ENCODE measurements at regions of chr11 and their contacts with region 1.

Region 1: GRCh38 chr11:129695575-129696308 is 119.9 kb upstream of the TMEM45B start:
- H3K4me3 ChIP-seq: no peak overlapping the region
- H3K27ac ChIP-seq: no peak overlapping the region
- H3K4me1 ChIP-seq: no peaks in the 10 kb centered on the region
- CTCF ChIP-seq: peak; percentile 30; the same call in 1 of the 2 replicates

Region 2: GRCh38 chr11:129364143-129364654 is 331.5 kb before region 1 on chr11:
- CTCF ChIA-PET with region 1: interaction called, 20 read pairs
- POLR2A ChIA-PET with region 1: no interaction called
- H3K4me3 ChIP-seq: no peak overlapping the region
- H3K27ac ChIP-seq: no peak overlapping the region
- H3K4me1 ChIP-seq: peaks cover 8% of the 10 kb centered on the region; the same call in 1 of the 2 replicates
- CTCF ChIP-seq: peak; percentile 98

Region 3: DNA sequence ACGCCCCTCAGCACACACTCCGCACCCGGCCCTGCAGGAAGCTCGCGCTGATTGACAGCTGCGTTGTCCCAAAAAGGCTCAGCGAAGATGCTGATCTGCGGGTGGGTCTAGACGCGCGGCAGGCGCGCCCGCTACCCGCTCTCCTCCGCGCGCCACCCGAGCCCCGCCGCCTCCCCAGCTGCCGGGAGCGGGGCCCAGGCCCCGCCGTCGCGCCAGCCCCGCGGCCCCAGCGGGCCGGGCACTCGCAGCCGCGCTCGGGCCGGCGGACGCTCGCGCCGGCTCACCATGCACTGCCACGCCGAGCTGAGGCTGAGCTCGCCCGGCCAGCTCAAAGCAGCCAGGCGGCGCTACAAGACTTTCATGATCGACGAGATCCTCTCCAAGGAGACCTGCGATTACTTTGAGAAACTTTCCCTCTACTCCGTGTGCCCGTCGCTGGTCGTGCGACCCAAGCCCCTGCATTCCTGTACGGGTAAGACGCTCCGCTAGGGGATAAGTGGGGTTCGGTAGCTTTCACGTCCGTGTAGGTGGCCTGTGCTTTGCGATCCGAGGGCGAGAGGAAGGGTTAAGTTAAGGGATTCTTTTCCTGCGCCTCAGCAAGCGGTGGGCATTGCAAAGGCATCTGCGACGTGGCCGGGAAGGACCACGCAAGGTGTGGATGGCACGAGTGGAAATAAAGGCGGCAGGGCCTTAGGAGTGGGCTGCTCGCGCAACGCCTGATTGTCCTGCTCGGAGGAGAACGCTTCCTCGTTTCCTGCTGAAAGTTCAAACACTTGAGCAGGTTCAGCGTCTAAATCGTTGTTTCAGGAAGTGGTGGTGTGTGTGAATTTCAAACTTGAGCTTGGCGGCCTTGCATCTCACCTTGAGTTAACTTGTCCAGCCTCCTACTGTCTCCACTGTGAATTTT is 319.7 kb before region 1 on chr11 and contains the start of gene BARX2:
- CTCF ChIA-PET with region 1: interaction called, 27 read pairs
- POLR2A ChIA-PET with region 1: interaction called, 3 read pairs
- H3K4me3 ChIP-seq: peak within 1 kb of the TSS; percentile 55
- H3K27ac ChIP-seq: peak within 1 kb of the TSS; percentile 93
- H3K4me1 ChIP-seq: peaks cover 8% of the 10 kb centered on the region
- CTCF ChIP-seq: peak; percentile 75

Region 4: GRCh38 chr11:129569007-129569406 is 126.7 kb before region 1 on chr11:
- CTCF ChIA-PET with region 1: no interaction called
- POLR2A ChIA-PET with region 1: no interaction called
- H3K4me3 ChIP-seq: no peak overlapping the region
- H3K27ac ChIP-seq: no peak overlapping the region
- H3K4me1 ChIP-seq: no peaks in the 10 kb centered on the region
- CTCF ChIP-seq: no peak

Region 5: GRCh38 chr11:129680907-129681306 is 14.8 kb before region 1 on chr11:
- CTCF ChIA-PET with region 1: interaction called, 12 read pairs
- POLR2A ChIA-PET with region 1: no interaction called
- H3K4me3 ChIP-seq: no peak overlapping the region
- H3K27ac ChIP-seq: no peak overlapping the region
- H3K4me1 ChIP-seq: no peaks in the 10 kb centered on the region
- CTCF ChIP-seq: no peak

Region 6: DNA sequence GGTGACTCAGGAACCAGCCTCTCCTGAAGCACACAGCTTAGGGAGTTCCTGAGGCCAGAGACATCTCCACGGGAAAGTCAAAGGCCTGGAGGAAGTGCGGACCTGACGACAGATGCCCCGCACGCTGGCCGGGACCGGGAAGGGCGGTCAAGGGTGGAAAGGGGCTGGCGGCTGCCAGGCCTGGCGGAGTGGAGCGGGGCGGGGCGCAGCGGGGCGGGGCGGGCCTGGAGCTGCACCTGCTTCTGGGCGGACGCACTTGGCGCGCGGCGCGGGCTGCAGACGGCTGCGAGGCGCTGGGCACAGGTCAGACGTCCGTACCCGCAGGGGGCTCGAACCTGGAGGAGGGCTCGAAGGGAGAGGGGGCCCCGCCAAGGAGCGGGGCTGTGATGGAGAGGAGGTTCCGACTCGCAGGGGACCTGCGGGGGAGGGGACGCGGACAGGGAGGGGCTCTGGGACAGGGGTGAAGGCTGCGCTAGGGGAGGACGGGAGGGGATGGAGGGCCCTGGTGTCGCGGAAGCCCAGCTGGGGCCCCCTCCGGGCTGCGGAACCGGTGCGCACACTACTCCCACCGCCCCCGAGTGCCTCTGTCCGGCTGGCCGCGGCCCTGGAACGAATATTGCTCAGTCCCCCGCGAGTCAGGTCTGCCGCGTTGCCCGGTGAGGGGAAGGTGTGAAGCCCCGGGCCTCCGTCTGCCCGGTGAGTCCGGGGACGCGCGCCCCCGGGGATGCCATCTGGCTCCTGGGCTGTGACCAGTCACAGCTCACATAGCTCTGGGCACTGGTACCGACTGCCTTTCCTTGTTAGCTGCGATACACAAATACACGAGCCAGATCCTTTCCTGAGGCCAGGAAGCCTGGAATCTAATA is 120.1 kb after region 1 on chr11 and contains the start of gene TMEM45B:
- CTCF ChIA-PET with region 1: no interaction called
- POLR2A ChIA-PET with region 1: no interaction called
- H3K4me3 ChIP-seq: peak within 1 kb of the TSS; percentile 33
- H3K27ac ChIP-seq: no peak within 1 kb of the TSS
- H3K4me1 ChIP-seq: no peaks in the 10 kb centered on the region
- CTCF ChIP-seq: no peak